Ascending aorta (tissue), 2 donors: ENCODE measurements at regions of chr10 and their contacts with region 1.

Region 1: GRCh38 chr10:71534568-71535194 is 138.0 kb downstream of the CDH23 start:
- DNase-seq: no peak
- H3K4me3 ChIP-seq: no peak overlapping the region
- H3K27ac ChIP-seq: no peak overlapping the region
- H3K4me1 ChIP-seq: no peaks in the 10 kb centered on the region
- H3K27me3 ChIP-seq: no peaks in the 10 kb centered on the region
- CTCF ChIP-seq: no peak

Region 2: GRCh38 chr10:71727738-71728737 is 193.4 kb after region 1 on chr10:
- intact Hi-C with region 1: no loop called
- DNase-seq: no peak
- H3K4me3 ChIP-seq: no peak overlapping the region
- H3K27ac ChIP-seq: peak overlapping the region; percentile 30 to 58
- H3K4me1 ChIP-seq: peaks cover 11 to 20% of the 10 kb centered on the region in 2 donors
- H3K27me3 ChIP-seq: no peaks in the 10 kb centered on the region
- CTCF ChIP-seq: no peak

Region 3: GRCh38 chr10:72379776-72380175 is 845.1 kb after region 1 on chr10:
- intact Hi-C with region 1: loop called (anchors 5 kb)
- DNase-seq: no peak
- H3K4me3 ChIP-seq: no peak overlapping the region
- H3K27ac ChIP-seq: no peak overlapping the region
- H3K4me1 ChIP-seq: no peaks in the 10 kb centered on the region
- H3K27me3 ChIP-seq: no peaks in the 10 kb centered on the region
- CTCF ChIP-seq: no peak